Activated CD8-positive, alpha-beta memory T cell treated with anti-CD3 and anti-CD28 coated beads, Interleukin-2, amount 10 ng/mL, durations not matched to agents 7 days and 5 days (primary cell): ENCODE measurements at regions of chr2 and their contacts with region 1.

Region 1: GRCh38 chr2:69375494-69376353 is 11.3 kb downstream of the GFPT1 start:
- DNase-seq: no peak
- ATAC-seq: peak; percentile 86
- H3K4me3 Mint-ChIP-seq: no peak overlapping the region
- H3K27ac Mint-ChIP-seq: no peak overlapping the region
- H3K4me1 Mint-ChIP-seq: peaks cover 12% of the 10 kb centered on the region
- H3K27me3 Mint-ChIP-seq: no peaks in the 10 kb centered on the region

Region 2: DNA sequence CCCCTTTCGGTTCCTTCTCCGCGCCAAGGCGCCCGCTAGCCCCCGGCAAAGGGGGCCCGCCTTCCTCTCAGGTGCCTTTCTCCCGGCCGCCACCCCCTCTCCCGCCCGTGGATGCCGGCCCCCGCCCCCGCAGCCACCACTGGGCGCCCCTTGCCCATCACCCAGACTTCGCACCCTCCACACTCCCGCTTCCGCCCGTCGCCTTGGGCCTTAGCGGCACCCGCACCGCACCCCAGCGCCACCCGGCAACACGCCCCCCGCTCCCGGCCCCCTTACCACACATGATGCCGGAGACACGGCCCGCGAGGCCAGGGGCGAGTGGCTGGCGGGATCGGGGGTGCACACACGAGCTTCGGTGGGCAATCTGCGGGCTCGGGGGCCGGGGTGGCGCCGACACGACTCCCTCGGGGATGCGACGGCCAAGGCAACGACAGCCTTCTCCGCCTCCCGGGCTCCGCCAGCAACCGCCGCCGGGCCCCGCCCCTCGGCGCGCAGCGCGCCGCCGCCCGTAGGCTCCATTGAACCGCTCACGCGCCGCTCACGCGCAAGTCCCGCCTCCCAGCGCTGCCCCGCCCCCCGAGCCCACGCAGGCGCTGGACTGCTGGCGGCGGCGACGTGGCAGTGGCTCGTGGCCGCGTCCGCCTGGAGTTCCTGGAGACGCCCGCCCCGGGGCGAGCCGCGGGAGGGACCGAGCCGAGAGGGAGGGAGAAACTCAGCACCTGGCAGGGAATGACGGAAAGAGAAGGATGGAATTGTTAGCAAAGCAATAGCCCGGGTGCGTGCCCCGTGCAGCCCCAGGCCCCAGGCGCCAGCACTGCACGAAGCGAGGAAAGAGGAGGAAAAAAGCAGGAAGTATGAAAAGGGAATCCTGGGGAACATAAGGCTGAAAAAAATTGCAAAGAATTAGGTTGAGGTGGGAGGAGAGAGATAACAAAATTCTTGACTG is 11.3 kb after region 1 on chr2 and contains the start of gene GFPT1:
- CTCF ChIA-PET with region 1: interaction called, 20 read pairs
- DNase-seq: peak; percentile 94
- ATAC-seq: peak; percentile 96
- H3K4me3 Mint-ChIP-seq: peak within 1 kb of the TSS; percentile 88
- H3K27ac Mint-ChIP-seq: peak within 1 kb of the TSS; percentile 90
- H3K4me1 Mint-ChIP-seq: peaks cover 37% of the 10 kb centered on the region
- H3K27me3 Mint-ChIP-seq: no peaks in the 10 kb centered on the region
- total RNA-seq, gene GFPT1: 21.7 to 22.8 TPM